Kidney (tissue), 22 donors: ENCODE measurements at regions of chr22 and their contacts with region 1.

Region 1: GRCh38 chr22:35349704-35350538 is 31.0 kb upstream of the HMOX1 start:
- DNase-seq: peak; percentile 51 to 78 (median 67)
- H3K4me3 ChIP-seq: no peak overlapping the region
- H3K27ac ChIP-seq: peak overlapping the region in 1 of 2 donors; percentile 34
- H3K4me1 ChIP-seq: peaks cover 0 to 15% (median 0%) of the 10 kb centered on the region in 3 donors
- H3K27me3 ChIP-seq: no peaks in the 10 kb centered on the region
- CTCF ChIP-seq: no peak

Region 2: GRCh38 chr22:35250156-35250555 is 99.8 kb before region 1 on chr22:
- intact Hi-C with region 1: no loop called
- DNase-seq: no peak
- H3K4me3 ChIP-seq: no peak overlapping the region
- H3K27ac ChIP-seq: no peak overlapping the region
- H3K4me1 ChIP-seq: no peaks in the 10 kb centered on the region
- H3K27me3 ChIP-seq: no peaks in the 10 kb centered on the region
- CTCF ChIP-seq: no peak

Region 3: DNA sequence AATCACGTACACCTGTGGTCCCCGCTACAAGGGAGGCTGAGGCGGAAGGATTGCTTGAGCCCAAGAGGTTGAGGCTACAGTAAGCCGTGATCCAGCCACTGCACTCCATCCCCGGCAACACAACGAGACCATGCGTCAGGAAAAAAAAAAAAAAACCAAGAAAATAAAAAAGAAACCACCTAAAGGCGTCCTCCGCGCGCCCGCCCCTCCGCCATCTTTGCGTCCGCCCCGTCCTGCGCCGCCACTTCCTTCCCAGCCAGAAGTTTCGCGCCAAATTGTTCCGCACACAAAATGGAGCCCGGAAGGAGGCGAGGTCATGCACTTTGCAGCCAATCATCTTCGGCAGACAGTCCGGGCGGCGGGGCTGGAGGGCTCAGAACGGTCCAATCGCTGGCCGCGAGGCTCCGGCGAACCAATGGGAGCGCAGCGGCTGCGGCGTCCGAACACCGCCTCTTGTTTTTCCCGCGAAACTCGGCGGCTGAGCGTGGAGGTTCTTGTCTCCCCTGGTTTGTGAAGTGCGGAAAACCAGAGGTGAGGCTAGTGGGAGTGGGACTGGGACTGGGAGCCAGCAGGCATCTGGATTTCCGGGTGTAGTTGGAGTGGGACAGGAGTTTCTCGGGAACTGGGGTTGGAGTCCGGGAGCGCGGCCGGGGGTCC is 49.9 kb after region 1 on chr22 and contains the start of gene MCM5:
- intact Hi-C with region 1: no loop called
- DNase-seq: peak; percentile 98 to 99 (median 99)
- H3K4me3 ChIP-seq: peak within 1 kb of the TSS; percentile 82 to 85 (median 83)
- H3K27ac ChIP-seq: peak within 1 kb of the TSS in 1 of 2 donors; percentile 76
- H3K4me1 ChIP-seq: peaks cover 0 to 3% (median 0%) of the 10 kb centered on the region in 3 donors
- H3K27me3 ChIP-seq: no peaks in the 10 kb centered on the region
- CTCF ChIP-seq: no peak
- total RNA-seq, gene MCM5: 26.4 TPM

Region 4: GRCh38 chr22:35582861-35583670 is 233.1 kb after region 1 on chr22:
- intact Hi-C with region 1: loop called (anchors 10 kb)
- DNase-seq: peak; percentile 66 to 76 (median 75)
- H3K4me3 ChIP-seq: no peak overlapping the region
- H3K27ac ChIP-seq: no peak overlapping the region
- H3K4me1 ChIP-seq: peaks cover 0 to 2% (median 0%) of the 10 kb centered on the region in 3 donors
- H3K27me3 ChIP-seq: no peaks in the 10 kb centered on the region
- CTCF ChIP-seq: peak; percentile 94